ENCODE measurements at regions of chr7 and their contacts with region 1.

Region 1: DNA sequence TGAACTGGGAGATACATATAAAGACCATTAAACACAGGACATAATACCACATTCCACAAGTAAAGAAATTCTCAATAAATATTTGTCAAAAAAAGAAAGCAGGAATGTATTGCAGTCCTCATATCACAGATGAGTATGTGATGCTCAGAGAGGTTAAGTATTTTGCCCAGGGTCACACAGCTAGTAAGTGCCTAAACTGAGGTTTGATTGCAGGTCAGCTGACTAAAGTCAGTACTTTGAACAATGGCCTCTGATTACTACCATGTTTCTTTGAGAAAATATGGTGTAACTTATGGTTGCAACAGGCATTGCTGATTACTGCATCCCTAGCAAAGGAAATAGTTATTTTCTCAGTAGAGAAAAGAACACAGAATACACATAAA is 267.1 kb downstream of the ELMO1 start:
- DNase-seq: no peak
- ATAC-seq: no peak
- H3K4me3 Mint-ChIP-seq: no peak overlapping the region
- H3K27ac Mint-ChIP-seq: no peak overlapping the region
- H3K4me1 Mint-ChIP-seq: no peaks in the 10 kb centered on the region
- H3K27me3 Mint-ChIP-seq: no peaks in the 10 kb centered on the region
- CTCF ChIP-seq: no peak

Region 2: DNA sequence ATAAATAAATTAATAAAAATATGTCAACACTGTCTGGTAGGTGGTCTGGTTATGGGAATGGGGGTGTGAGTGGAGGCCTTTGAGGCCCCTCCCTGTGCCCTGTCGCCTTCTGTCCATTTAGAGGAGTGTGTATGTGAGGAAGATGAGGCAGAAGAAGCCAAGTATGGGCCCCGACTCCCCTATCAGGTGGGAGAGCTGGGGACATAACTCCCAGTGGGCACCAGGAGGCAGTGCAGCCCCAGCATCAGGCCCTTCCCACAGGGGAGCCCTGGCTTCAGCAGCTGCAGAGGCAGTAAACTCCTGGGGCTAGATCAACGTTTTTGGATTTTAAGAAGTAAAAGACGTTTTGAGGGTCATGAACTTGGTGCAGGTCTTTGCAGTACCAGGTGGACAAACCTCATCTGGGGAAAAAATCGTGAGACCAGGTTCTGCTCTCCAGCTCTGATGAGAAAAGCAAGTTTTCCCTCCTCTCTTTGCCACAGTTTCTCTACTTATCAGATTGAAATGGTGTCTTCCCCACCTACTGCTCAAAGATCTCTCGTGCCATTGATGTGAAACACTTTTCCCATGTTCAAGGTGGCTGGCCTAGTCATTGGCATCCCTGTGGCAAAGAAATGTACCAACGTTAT is 1196.3 kb before region 1 on chr7:
- CTCF ChIA-PET with region 1: interaction called, 3 read pairs
- POLR2A ChIA-PET with region 1: no interaction called
- intact Hi-C with region 1: loop called (anchors 5 kb)
- DNase-seq: peak; percentile 56
- ATAC-seq: peak; percentile 100
- H3K4me3 Mint-ChIP-seq: no peak overlapping the region
- H3K27ac Mint-ChIP-seq: no peak overlapping the region
- H3K4me1 Mint-ChIP-seq: no peaks in the 10 kb centered on the region
- H3K27me3 Mint-ChIP-seq: peaks cover 2% of the 10 kb centered on the region
- CTCF ChIP-seq: no peak

Region 3: DNA sequence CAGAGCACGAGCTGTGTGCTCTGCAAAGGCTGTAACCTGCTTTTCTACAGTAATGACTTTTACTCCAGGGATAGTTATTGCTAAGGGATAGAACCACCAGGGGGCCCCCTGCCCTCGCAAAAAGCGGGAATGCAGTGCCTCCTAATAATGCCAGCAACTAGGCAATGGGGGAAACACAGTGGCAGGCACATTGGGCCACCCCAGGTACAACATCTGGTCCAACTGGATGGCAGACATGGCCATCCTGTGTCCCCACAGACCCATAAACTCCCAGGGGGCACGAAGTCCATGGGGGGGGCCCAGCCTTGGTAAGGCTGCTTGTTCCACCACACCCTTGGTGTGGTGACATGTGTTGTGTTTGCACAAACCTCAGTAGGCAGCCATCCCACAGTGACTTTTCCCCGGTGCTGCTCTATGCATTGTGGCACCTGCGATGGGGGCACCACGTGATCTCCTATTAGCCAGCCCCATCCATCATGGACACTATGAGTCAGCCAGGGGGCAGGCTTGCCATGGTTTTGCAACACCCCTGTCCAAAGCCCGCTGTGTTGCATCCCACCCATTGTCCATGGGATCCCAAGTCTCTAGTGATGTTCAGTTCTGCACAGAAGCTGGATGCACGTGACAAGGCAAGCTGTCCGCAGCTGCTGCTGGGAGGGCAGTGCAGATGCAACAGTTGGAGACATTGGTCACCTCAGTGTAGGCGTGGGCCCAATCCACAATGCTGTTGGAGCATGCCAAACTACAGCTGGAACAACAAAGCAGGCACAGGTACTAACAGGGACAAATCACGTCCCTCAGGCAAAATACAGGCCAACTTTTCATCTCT is 707.9 kb before region 1 on chr7:
- CTCF ChIA-PET with region 1: interaction called, 17 read pairs
- POLR2A ChIA-PET with region 1: no interaction called
- intact Hi-C with region 1: loop called (anchors 1 kb)
- DNase-seq: no peak
- ATAC-seq: no peak
- H3K4me3 Mint-ChIP-seq: no peak overlapping the region
- H3K27ac Mint-ChIP-seq: no peak overlapping the region
- H3K4me1 Mint-ChIP-seq: no peaks in the 10 kb centered on the region
- H3K27me3 Mint-ChIP-seq: peaks cover 3% of the 10 kb centered on the region
- CTCF ChIP-seq: no peak

Region 4: DNA sequence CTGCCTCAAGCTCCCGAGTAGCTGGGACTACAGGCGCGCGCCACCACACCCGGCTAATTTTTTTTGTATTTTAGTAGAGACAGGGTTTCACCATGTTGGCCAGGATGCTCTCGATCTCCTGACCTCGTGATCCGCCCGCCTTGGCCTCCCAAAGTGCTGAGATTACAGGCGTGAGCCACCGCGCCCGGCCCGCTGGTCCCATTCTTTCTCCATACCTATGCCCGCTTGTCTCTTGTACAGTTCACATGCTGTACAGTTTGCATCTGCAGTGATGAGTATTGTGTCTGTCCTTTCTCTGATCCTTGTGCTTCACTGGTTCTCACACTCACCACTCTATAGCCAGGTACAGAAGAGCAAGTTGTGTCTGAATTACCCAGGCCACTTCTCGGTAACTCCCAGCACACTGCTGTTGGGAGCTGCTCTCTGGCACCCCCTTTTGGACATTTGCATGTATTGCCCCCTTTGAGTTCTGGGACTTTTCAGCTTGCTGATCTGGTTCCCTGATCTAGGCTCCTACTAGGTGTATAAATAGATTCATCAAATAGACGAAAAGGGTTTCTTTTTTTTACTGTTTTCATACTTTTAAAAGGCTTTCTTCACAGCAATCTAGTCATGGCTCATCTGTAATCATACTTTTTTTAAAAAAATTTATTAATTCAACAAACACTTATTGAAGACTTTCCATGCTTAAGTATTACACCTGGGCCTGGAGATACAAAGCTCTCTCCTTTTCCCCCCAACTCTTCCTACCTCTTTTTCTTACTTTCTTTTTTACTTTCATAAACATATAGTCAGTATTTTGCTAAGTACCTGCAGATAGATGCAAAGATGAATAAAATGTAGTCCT is 510.7 kb before region 1 on chr7:
- CTCF ChIA-PET with region 1: interaction called, 9 read pairs
- POLR2A ChIA-PET with region 1: no interaction called
- intact Hi-C with region 1: loop called (anchors 2 kb)
- DNase-seq: no peak
- ATAC-seq: peak; percentile 72
- H3K4me3 Mint-ChIP-seq: no peak overlapping the region
- H3K27ac Mint-ChIP-seq: no peak overlapping the region
- H3K4me1 Mint-ChIP-seq: no peaks in the 10 kb centered on the region
- H3K27me3 Mint-ChIP-seq: no peaks in the 10 kb centered on the region
- CTCF ChIP-seq: no peak

Region 5: DNA sequence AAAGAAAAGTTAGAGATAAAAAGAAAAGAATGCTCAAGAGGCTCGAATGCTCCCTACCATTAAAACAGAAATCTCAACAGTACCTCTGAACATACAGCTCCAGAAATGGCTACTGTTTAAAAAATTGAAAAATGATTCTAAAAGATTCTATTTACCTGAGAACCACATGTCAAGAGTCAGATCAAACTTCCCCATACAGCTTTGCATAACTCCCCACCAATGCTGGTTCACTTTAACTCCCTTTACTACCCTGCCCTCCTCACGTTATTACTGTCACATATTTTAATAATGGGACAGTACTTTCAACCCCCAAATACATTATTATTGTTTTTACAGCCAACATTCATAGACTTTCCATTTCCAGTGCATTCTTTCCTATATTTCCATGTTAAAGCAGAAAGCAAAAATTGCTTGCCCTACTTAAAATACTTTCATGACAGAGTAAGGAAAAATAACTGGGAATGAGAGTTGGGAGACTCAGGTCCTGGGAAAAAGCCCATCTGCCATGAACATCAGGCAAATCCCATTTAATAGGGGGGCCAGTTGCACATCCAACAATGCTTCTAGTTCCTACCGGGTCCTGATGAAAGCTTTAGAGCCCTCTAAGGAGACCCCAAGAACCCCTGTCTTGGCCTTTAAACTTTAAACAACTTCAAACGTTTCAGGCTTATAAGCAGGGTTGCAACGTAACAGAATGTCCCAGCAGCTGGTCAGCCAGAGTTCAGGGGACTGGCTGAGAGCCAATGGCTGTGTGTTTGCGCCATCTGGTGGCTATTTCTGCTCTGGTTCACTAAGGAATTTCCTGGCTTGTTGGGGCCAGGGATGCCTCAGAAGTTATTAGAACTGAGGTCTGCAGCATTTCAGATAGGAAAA is 19.7 kb after region 1 on chr7:
- CTCF ChIA-PET with region 1: interaction called, 21 read pairs
- POLR2A ChIA-PET with region 1: no interaction called
- intact Hi-C with region 1: no loop called
- DNase-seq: no peak
- ATAC-seq: peak; percentile 37
- H3K4me3 Mint-ChIP-seq: no peak overlapping the region
- H3K27ac Mint-ChIP-seq: peak overlapping the region; percentile 59
- H3K4me1 Mint-ChIP-seq: peaks cover 19% of the 10 kb centered on the region
- H3K27me3 Mint-ChIP-seq: no peaks in the 10 kb centered on the region
- CTCF ChIP-seq: no peak

Region 6: DNA sequence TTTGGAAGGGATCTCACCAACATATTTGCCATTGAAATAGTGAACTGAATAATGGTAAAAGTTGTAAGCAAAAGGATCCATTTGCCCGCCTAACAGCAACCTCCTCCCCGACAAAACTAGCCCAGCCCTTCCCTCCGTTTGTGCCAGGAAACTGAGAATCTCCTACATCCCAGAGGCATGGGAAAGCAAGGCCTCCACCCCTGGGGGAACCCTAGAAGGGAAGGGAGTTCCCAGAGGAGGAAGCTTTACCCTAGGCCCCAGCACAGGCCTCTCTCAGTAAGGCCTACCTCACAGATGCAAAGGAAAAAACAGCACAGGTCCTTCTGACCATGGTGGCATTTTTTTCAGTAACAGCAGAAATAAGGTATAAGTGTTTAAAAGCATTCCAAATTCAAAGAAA is 37.4 kb after region 1 on chr7:
- CTCF ChIA-PET with region 1: no interaction called
- POLR2A ChIA-PET with region 1: no interaction called
- intact Hi-C with region 1: no loop called
- DNase-seq: no peak
- ATAC-seq: no peak
- H3K4me3 Mint-ChIP-seq: no peak overlapping the region
- H3K27ac Mint-ChIP-seq: no peak overlapping the region
- H3K4me1 Mint-ChIP-seq: no peaks in the 10 kb centered on the region
- H3K27me3 Mint-ChIP-seq: no peaks in the 10 kb centered on the region
- CTCF ChIP-seq: no peak

Measured in activated B cell treated with CpG ODN at 0.5 μM for 24 hours (primary cell).